Prostate gland (tissue), 2 donors: ENCODE measurements at regions of chr1 and their contacts with region 1.

Region 1: DNA sequence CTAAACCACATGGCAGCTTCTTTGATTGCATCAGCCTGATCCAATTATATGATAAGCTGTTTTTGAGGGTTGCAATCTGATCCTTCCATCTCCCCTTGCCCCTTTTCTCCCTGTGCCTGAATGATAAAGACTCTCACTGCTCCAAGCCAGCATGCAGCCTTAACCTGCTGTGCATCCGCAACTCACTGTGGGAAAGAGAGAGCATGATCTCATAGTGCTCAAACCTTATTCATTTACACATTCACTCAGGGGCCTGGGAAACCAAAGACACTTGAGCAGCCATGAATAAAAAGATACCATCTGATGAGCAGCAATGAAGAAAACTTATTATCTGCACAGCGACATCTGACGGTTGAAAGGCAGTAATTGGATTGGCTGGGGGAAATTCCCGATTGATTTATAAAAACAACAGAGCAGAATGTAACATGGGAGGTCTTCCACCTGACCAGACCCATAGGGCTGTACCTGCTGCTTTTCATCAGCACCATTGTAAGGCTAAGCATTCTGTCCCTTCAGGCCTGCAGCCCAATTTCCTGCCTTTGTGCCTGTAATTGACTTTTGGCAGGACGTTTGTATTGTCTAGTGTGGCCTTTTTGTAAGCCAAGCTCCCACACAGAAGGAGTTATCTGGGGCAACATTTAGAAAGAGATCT is 62.5 kb downstream of the KIAA0040 start:
- DNase-seq: no peak
- H3K4me3 ChIP-seq: no peak overlapping the region
- H3K27ac ChIP-seq: no peak overlapping the region
- H3K4me1 ChIP-seq: no peaks in the 10 kb centered on the region
- H3K27me3 ChIP-seq: no peaks in the 10 kb centered on the region
- CTCF ChIP-seq: no peak
- POLR2A ChIP-seq: no peak

Region 2: DNA sequence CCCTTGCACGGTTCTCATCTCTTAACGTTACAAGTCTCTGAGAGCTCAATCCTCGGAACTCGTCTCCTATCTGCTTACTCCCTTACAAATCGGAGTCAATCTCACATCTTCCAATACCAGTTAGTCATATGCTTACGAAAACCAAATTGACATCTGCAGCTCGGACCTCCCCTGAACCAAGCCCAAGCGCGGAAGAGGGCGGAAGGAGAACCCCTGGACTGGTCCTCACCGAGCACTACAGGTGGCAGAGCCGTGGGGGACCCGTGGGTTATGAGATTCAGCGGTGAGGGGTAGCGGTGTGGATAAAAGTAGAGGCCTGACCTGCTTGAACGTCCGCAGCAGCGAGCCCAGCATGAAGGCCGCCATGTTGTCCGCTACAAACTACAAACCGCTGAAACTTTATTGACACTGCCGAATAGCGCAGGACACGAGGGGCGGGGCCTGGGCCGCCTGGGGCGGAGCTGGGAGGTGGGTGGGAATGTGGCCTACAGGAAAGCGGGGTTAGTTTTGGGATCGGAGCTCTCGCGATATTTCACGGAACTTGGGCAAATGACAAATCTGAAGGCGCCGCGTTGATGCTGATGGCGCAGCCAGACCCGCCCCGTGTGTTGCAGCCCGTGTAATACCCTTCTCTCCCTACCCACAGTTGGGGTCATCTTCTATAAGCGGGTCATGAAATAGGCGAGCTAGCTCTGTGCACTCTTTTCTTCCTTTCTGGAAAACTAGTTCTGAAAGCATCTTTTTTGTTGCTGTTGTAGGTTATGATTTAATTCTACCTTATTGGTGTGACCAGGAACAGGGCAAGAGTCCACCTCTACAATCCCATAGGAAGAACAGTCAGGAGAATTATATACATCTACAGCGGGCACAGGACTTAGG is 106.8 kb before region 1 on chr1 and contains the start of gene MRPS14:
- intact Hi-C with region 1: loop called (anchors 5 kb)
- DNase-seq: peak; percentile 96
- H3K4me3 ChIP-seq: peak within 1 kb of the TSS; percentile 68 to 69
- H3K27ac ChIP-seq: peak within 1 kb of the TSS; percentile 71 to 78
- H3K4me1 ChIP-seq: no peaks in the 10 kb centered on the region
- H3K27me3 ChIP-seq: no peaks in the 10 kb centered on the region
- CTCF ChIP-seq: no peak
- POLR2A ChIP-seq: peak; percentile 83
- total RNA-seq, gene MRPS14: 25.6 to 32.1 TPM

Region 3: DNA sequence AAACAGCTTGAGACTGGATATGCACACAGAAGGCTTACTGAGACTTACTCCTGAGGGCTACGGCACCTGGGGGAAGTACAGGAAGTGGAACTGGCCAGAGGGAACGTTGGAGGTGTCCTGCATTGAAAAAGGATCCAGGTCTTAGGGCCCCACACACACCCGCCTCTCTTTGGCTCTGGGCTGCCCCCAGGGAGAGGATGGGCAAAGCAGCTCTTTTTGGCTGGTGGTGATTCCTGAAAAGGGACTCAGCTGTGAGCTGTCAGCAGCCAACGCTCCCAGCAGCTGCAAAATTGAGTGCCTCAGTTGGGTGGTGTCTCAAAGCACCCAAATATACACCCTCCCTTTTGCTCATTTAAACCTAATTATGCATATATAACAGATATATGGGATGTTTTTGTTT is 400.1 kb after region 1 on chr1:
- intact Hi-C with region 1: no loop called
- DNase-seq: no peak
- H3K4me3 ChIP-seq: no peak overlapping the region
- H3K27ac ChIP-seq: no peak overlapping the region
- H3K4me1 ChIP-seq: no peaks in the 10 kb centered on the region
- H3K27me3 ChIP-seq: no peaks in the 10 kb centered on the region
- CTCF ChIP-seq: no peak
- POLR2A ChIP-seq: no peak